ENCODE measurements at regions of chr7 and their contacts with region 1.

Region 1: GRCh38 chr7:7103343-7104313 is 78.7 kb upstream of the C1GALT1 start:
- DNase-seq: peak; percentile 58
- H3K4me3 ChIP-seq: no peak overlapping the region
- H3K27ac ChIP-seq: peak overlapping the region; percentile 10
- H3K4me1 ChIP-seq: peaks cover 32% of the 10 kb centered on the region
- H3K27me3 ChIP-seq: no peaks in the 10 kb centered on the region
- CTCF ChIP-seq: peak; percentile 52 to 68

Region 2: GRCh38 chr7:7051206-7051877 is 52.3 kb before region 1 on chr7:
- CTCF ChIA-PET with region 1: no interaction called
- dilution Hi-C with region 1: no loop called
- in situ Hi-C with region 1: no loop called
- intact Hi-C with region 1: no loop called
- DNase-seq: no peak
- H3K4me3 ChIP-seq: no peak overlapping the region
- H3K27ac ChIP-seq: no peak overlapping the region
- H3K4me1 ChIP-seq: no peaks in the 10 kb centered on the region
- H3K27me3 ChIP-seq: no peaks in the 10 kb centered on the region
- CTCF ChIP-seq: no peak

Region 3: DNA sequence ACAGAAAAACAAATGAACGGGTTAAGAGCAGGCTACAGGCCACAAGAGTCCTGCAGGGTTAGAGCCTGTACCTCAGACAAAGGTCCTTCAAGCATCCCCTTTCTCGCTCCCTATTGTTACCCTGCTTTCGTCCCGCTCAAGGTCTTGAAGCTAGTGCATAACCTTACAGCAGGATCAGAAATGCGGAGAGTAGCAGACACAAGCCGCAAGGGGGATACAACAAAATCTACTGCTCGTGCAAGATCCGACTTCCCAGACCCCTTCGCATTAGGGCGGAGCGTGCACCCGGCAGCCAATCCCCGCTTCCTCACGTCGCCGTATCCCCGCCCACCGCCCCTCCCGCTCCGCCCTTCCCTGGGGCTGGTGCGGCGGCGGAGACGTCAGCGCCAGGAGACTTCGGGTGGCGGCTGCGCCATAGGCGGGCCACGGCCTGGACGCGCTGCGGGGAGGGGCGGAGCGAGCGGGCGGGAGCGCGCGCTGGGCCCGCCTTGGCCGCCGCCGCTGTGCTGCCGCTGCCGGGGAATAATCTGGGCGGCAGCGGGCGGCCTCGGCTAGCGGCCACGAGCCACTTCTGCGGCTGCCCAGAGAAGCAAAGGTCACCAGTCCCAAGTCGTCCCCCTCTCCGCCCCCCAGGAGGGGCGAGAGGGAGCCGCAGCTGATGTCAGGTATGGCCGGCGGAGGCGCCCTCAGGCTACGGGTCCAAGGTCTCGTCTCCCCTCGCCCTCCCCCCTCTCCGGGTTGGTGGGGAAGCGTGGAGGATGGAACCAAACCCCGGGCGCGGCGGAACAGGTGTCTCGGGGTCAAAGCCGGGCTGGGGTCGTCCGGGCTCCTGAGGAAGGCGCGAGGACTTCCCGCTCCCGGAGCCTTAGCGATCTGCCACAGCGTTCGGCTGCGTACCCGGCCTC is 78.8 kb after region 1 on chr7 and contains the start of gene C1GALT1:
- CTCF ChIA-PET with region 1: interaction called, 3 read pairs
- dilution Hi-C with region 1: no loop called
- in situ Hi-C with region 1: no loop called
- intact Hi-C with region 1: loop called (anchors 1 kb)
- DNase-seq: peak; percentile 96
- H3K4me3 ChIP-seq: peak within 1 kb of the TSS; percentile 95 to 97 (median 97)
- H3K27ac ChIP-seq: peak within 1 kb of the TSS; percentile 92
- H3K4me1 ChIP-seq: peaks cover 47% of the 10 kb centered on the region
- H3K27me3 ChIP-seq: no peaks in the 10 kb centered on the region
- CTCF ChIP-seq: peak; percentile 27 to 48
- total RNA-seq, gene C1GALT1: 51.2 to 57.7 TPM

Region 4: GRCh38 chr7:7263312-7264230 is 159.9 kb after region 1 on chr7:
- CTCF ChIA-PET with region 1: interaction called, 3 read pairs
- dilution Hi-C with region 1: no loop called
- in situ Hi-C with region 1: loop called in 1 of 2 experiments (anchors 25 kb)
- intact Hi-C with region 1: loop called (anchors 5 kb)
- DNase-seq: no peak
- H3K4me3 ChIP-seq: no peak overlapping the region
- H3K27ac ChIP-seq: no peak overlapping the region
- H3K4me1 ChIP-seq: no peaks in the 10 kb centered on the region
- H3K27me3 ChIP-seq: no peaks in the 10 kb centered on the region
- CTCF ChIP-seq: no peak

Region 5: GRCh38 chr7:7416031-7416858 is 312.6 kb after region 1 on chr7:
- CTCF ChIA-PET with region 1: interaction called, 3 read pairs
- dilution Hi-C with region 1: no loop called
- in situ Hi-C with region 1: no loop called
- intact Hi-C with region 1: loop called (anchors 2 kb)
- DNase-seq: peak; percentile 69
- H3K4me3 ChIP-seq: no peak overlapping the region
- H3K27ac ChIP-seq: no peak overlapping the region
- H3K4me1 ChIP-seq: peaks cover 6% of the 10 kb centered on the region
- H3K27me3 ChIP-seq: no peaks in the 10 kb centered on the region
- CTCF ChIP-seq: no peak

Region 6: DNA sequence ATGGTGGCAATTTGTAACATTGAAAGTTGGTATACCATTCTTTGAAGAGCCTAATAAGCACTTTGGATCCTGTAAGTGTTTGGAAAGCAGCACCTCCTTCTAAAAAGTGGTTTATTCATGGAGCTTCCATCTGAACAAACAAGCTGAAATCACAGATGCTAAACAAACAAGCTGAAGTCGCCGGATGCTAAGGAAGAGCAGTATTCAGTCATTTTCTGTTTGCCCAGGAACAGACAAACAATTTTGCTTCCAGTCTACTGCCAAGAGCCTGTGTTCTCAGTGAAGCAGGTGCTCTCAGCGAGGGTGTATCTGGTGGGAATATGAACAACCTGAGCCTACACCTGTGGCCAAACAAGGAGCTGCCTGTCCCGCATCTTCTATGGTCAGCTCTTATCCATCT is 425.7 kb after region 1 on chr7:
- CTCF ChIA-PET with region 1: no interaction called
- dilution Hi-C with region 1: no loop called
- in situ Hi-C with region 1: loop called in 1 of 2 experiments (anchors 25 kb)
- intact Hi-C with region 1: no loop called
- DNase-seq: no peak
- H3K4me3 ChIP-seq: no peak overlapping the region
- H3K27ac ChIP-seq: no peak overlapping the region
- H3K4me1 ChIP-seq: no peaks in the 10 kb centered on the region
- H3K27me3 ChIP-seq: peaks cover 2% of the 10 kb centered on the region
- CTCF ChIP-seq: no peak